B cell (primary cell): ENCODE measurements at regions of chr12 and their contacts with region 1.

Region 1: DNA sequence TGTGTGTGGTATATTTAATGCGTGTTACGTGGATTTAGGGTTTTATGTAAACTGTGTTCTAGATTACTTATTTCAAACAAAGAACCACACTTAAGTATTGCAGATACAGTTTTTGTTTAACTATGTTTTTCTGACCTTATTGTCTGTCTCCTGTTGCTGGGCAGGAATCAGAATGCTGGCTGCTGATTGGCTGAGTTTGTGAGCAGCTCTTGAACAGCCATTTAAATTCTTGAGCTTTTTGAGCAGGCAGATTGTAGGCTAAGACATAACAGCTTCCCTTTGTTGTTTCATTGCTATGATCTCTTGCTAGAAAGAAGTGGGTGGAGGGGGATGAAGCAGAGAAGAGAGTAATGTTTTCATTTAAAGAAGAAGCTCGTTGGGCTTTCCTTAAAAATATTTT is 52.2 kb downstream of the ATF7IP start:
- DNase-seq: peak; percentile 67
- ATAC-seq: peak; percentile 48
- H3K4me3 ChIP-seq: no peak overlapping the region
- H3K4me3 Mint-ChIP-seq: peak overlapping the region; percentile 75
- H3K27ac ChIP-seq: no peak overlapping the region
- H3K27ac Mint-ChIP-seq: peak overlapping the region; percentile 62
- H3K4me1 ChIP-seq: peaks cover 21 to 42% of the 10 kb centered on the region in 2 donors
- H3K4me1 Mint-ChIP-seq: peaks cover 53% of the 10 kb centered on the region
- H3K27me3 ChIP-seq: no peaks in the 10 kb centered on the region
- H3K27me3 Mint-ChIP-seq: no peaks in the 10 kb centered on the region
- CTCF ChIP-seq: no peak

Region 2: GRCh38 chr12:14129611-14130195 is 288.0 kb before region 1 on chr12:
- CTCF ChIA-PET with region 1: no interaction called
- POLR2A ChIA-PET with region 1: no interaction called
- intact Hi-C with region 1: no loop called
- DNase-seq: no peak
- ATAC-seq: no peak
- H3K4me3 ChIP-seq: no peak overlapping the region
- H3K4me3 Mint-ChIP-seq: no peak overlapping the region
- H3K27ac ChIP-seq: no peak overlapping the region
- H3K27ac Mint-ChIP-seq: no peak overlapping the region
- H3K4me1 ChIP-seq: no peaks in the 10 kb centered on the region
- H3K4me1 Mint-ChIP-seq: no peaks in the 10 kb centered on the region
- H3K27me3 ChIP-seq: peaks cover 0 to 4% (median 0%) of the 10 kb centered on the region in 4 experiments
- H3K27me3 Mint-ChIP-seq: peaks cover 8% of the 10 kb centered on the region
- CTCF ChIP-seq: no peak

Region 3: GRCh38 chr12:14403711-14404196 is 14.0 kb before region 1 on chr12:
- CTCF ChIA-PET with region 1: no interaction called
- POLR2A ChIA-PET with region 1: interaction called, 7 read pairs
- intact Hi-C with region 1: loop called (anchors 2 kb)
- DNase-seq: peak; percentile 68
- ATAC-seq: peak; percentile 65
- H3K4me3 ChIP-seq: no peak overlapping the region
- H3K4me3 Mint-ChIP-seq: peak overlapping the region; percentile 62
- H3K27ac ChIP-seq: peak overlapping the region; percentile 23 to 69
- H3K27ac Mint-ChIP-seq: peak overlapping the region; percentile 74
- H3K4me1 ChIP-seq: peaks cover 21 to 52% of the 10 kb centered on the region in 2 donors
- H3K4me1 Mint-ChIP-seq: peaks cover 61% of the 10 kb centered on the region
- H3K27me3 ChIP-seq: no peaks in the 10 kb centered on the region
- H3K27me3 Mint-ChIP-seq: no peaks in the 10 kb centered on the region
- CTCF ChIP-seq: no peak

Region 4: DNA sequence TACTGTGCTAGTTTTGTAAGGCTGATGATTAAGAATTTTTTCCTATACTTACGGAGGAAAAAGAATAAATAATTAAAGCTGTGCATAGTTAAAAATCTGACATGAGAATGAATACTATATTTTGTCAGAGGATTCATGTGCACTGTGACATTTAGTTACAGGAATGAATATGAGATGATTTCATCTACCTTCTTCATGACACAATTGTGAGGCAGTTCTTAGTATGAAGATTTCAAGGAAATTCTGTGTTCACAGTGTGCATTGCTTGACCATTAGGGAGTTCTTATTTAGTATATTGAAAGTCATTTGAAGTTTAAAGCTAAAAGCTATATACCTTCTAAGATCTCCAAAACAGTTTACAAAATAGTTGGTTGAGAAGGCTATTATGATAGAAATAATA is 17.9 kb after region 1 on chr12:
- CTCF ChIA-PET with region 1: no interaction called
- POLR2A ChIA-PET with region 1: no interaction called
- intact Hi-C with region 1: no loop called
- DNase-seq: no peak
- ATAC-seq: no peak
- H3K4me3 ChIP-seq: no peak overlapping the region
- H3K4me3 Mint-ChIP-seq: no peak overlapping the region
- H3K27ac ChIP-seq: peak overlapping the region in 1 of 2 donors; percentile 41
- H3K27ac Mint-ChIP-seq: no peak overlapping the region
- H3K4me1 ChIP-seq: no peaks in the 10 kb centered on the region
- H3K4me1 Mint-ChIP-seq: peaks cover 12% of the 10 kb centered on the region
- H3K27me3 ChIP-seq: no peaks in the 10 kb centered on the region
- H3K27me3 Mint-ChIP-seq: no peaks in the 10 kb centered on the region
- CTCF ChIP-seq: no peak

Region 5: DNA sequence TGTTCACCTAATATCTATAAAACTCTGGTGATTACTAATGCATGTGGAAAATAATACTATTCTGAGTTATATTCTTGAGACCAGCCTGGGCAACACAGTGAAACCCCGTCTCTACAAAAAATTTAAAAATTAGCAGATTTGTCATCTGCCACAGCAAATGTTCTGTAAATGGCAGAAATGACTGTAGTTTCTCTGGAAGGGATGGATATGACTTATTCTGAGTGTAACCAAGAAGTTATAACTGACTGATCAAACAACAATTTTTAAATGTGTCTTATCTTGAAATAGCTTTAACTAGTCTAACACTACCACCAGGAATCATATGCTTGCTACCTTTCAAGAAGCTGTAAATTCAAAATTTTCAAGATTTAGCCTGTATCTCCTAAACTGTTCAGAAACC is 61.3 kb after region 1 on chr12:
- CTCF ChIA-PET with region 1: no interaction called
- POLR2A ChIA-PET with region 1: no interaction called
- intact Hi-C with region 1: no loop called
- DNase-seq: no peak
- ATAC-seq: no peak
- H3K4me3 ChIP-seq: no peak overlapping the region
- H3K4me3 Mint-ChIP-seq: no peak overlapping the region
- H3K27ac ChIP-seq: peak overlapping the region in 1 of 2 donors; percentile 27
- H3K27ac Mint-ChIP-seq: no peak overlapping the region
- H3K4me1 ChIP-seq: no peaks in the 10 kb centered on the region
- H3K4me1 Mint-ChIP-seq: no peaks in the 10 kb centered on the region
- H3K27me3 ChIP-seq: no peaks in the 10 kb centered on the region
- H3K27me3 Mint-ChIP-seq: no peaks in the 10 kb centered on the region
- CTCF ChIP-seq: no peak

Region 6: GRCh38 chr12:14767617-14768016 is 349.9 kb after region 1 on chr12:
- CTCF ChIA-PET with region 1: no interaction called
- POLR2A ChIA-PET with region 1: no interaction called
- intact Hi-C with region 1: no loop called
- DNase-seq: no peak
- ATAC-seq: no peak
- H3K4me3 ChIP-seq: no peak overlapping the region
- H3K4me3 Mint-ChIP-seq: peak overlapping the region; percentile 16
- H3K27ac ChIP-seq: peak overlapping the region; percentile 35 to 94
- H3K27ac Mint-ChIP-seq: peak overlapping the region; percentile 37
- H3K4me1 ChIP-seq: peaks cover 28 to 32% of the 10 kb centered on the region in 2 donors
- H3K4me1 Mint-ChIP-seq: peaks cover 41% of the 10 kb centered on the region
- H3K27me3 ChIP-seq: no peaks in the 10 kb centered on the region
- H3K27me3 Mint-ChIP-seq: no peaks in the 10 kb centered on the region
- CTCF ChIP-seq: no peak